CD8-positive, alpha-beta T cell (primary cell): ENCODE measurements at regions of chr2 and their contacts with region 1.

Region 1: GRCh38 chr2:103525756-103526155 is 763.9 kb downstream of the TMEM182 start:
- DNase-seq: no peak
- ATAC-seq: no peak
- H3K4me3 ChIP-seq: no peak overlapping the region
- H3K4me3 Mint-ChIP-seq: no peak overlapping the region
- H3K27ac ChIP-seq: no peak overlapping the region
- H3K27ac Mint-ChIP-seq: no peak overlapping the region
- H3K4me1 ChIP-seq: no peaks in the 10 kb centered on the region
- H3K4me1 Mint-ChIP-seq: no peaks in the 10 kb centered on the region
- H3K27me3 ChIP-seq: no peaks in the 10 kb centered on the region
- H3K27me3 Mint-ChIP-seq: no peaks in the 10 kb centered on the region
- CTCF ChIP-seq: no peak

Region 2: GRCh38 chr2:103512442-103512841 is 13.3 kb before region 1 on chr2:
- CTCF ChIA-PET with region 1: no interaction called
- POLR2A ChIA-PET with region 1: no interaction called
- intact Hi-C with region 1: loop called in 1 of 2 experiments (anchors 1 kb)
- DNase-seq: no peak
- ATAC-seq: no peak
- H3K4me3 ChIP-seq: no peak overlapping the region
- H3K4me3 Mint-ChIP-seq: no peak overlapping the region
- H3K27ac ChIP-seq: no peak overlapping the region
- H3K27ac Mint-ChIP-seq: no peak overlapping the region
- H3K4me1 ChIP-seq: no peaks in the 10 kb centered on the region
- H3K4me1 Mint-ChIP-seq: no peaks in the 10 kb centered on the region
- H3K27me3 ChIP-seq: no peaks in the 10 kb centered on the region
- H3K27me3 Mint-ChIP-seq: no peaks in the 10 kb centered on the region
- CTCF ChIP-seq: no peak